Breast epithelium (tissue), 4 donors: ENCODE measurements at regions of chr11 and their contacts with region 1.

Region 1: DNA sequence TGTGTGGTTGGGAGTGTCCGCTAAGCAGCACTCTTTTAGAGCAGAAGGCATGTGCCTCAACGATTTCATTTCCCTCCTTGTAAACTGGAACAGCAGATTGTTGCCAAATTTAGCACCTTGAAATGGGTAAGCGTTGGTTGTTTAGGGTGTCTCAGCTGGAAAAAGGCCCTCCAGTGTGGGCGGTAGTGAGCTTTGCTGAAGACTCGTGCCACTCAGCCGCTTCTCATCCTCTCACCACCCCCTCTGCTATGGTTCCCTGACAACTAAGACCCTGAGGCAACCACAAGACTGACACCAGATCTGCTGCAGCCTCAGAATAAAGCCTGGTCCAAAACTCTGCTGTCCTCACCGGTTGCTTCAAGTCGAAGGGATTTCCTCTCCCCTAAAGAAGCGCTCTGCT is 9.9 kb upstream of the FERMT3 start:
- DNase-seq: no peak
- H3K4me3 ChIP-seq: no peak overlapping the region
- H3K27ac ChIP-seq: no peak overlapping the region
- H3K4me1 ChIP-seq: no peaks in the 10 kb centered on the region
- H3K27me3 ChIP-seq: no peaks in the 10 kb centered on the region
- CTCF ChIP-seq: no peak
- POLR2A ChIP-seq: no peak

Region 2: GRCh38 chr11:62551696-62552250 is 1644.9 kb before region 1 on chr11:
- intact Hi-C with region 1: loop called (anchors 5 kb)
- DNase-seq: peak in 1 of 2 donors; percentile 69
- H3K4me3 ChIP-seq: no peak overlapping the region
- H3K27ac ChIP-seq: peak overlapping the region; percentile 96 to 98
- H3K4me1 ChIP-seq: peaks cover 41 to 64% of the 10 kb centered on the region in 2 donors
- H3K27me3 ChIP-seq: no peaks in the 10 kb centered on the region
- CTCF ChIP-seq: no peak
- POLR2A ChIP-seq: no peak

Region 3: DNA sequence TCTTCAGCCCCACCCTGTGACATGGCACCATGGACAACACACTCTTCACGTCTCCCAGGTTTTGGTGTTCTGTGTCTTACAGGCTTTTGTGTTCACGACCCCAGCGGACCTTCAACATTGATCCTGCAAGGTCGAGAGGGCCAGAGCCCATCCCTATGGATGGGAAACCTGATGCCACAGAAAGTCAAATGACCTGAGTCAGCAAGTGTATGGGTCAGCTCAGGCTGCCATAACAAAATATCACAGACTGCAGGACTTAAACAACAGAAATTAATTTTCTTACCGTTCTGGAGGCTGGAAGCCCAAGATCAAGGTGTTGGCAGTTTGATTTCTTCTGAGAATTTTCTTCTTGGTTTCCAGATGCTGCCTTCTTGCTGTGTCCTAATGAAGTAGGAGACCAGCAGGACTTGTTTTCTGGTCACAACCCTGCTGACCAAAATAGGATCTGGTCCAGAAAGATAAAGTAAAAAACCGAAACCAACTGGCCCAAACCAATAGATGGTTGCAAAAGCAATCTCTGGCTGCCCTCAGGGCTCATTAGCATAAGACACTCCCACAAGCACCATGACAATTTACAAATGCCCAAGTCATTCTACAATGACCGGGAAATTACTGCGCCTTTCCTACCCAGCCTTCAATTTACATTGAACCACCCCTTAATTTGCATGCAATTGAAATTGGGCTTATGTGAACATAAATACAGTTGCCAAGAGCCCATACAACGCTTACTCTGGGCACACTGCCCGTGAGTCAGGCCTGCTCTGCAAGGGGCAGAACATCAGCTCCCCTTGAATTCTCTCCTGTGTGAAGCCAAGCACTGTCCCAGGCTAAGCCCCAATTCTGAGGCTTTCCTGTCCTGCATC is 276.2 kb after region 1 on chr11:
- intact Hi-C with region 1: loop called (anchors 5 kb)
- DNase-seq: no peak
- H3K4me3 ChIP-seq: no peak overlapping the region
- H3K27ac ChIP-seq: no peak overlapping the region
- H3K4me1 ChIP-seq: no peaks in the 10 kb centered on the region
- H3K27me3 ChIP-seq: no peaks in the 10 kb centered on the region
- CTCF ChIP-seq: no peak
- POLR2A ChIP-seq: no peak